MCF 10A (cell line): ENCODE measurements at regions of chr18 and their contacts with region 1.

Region 1: GRCh38 chr18:9069601-9070000 is 32.9 kb upstream of the NDUFV2 start:
- DNase-seq: no peak
- H3K4me3 Mint-ChIP-seq: no peak overlapping the region
- H3K27ac Mint-ChIP-seq: no peak overlapping the region
- H3K4me1 Mint-ChIP-seq: peaks cover 7% of the 10 kb centered on the region
- H3K27me3 Mint-ChIP-seq: no peaks in the 10 kb centered on the region
- CTCF ChIP-seq: no peak

Region 2: DNA sequence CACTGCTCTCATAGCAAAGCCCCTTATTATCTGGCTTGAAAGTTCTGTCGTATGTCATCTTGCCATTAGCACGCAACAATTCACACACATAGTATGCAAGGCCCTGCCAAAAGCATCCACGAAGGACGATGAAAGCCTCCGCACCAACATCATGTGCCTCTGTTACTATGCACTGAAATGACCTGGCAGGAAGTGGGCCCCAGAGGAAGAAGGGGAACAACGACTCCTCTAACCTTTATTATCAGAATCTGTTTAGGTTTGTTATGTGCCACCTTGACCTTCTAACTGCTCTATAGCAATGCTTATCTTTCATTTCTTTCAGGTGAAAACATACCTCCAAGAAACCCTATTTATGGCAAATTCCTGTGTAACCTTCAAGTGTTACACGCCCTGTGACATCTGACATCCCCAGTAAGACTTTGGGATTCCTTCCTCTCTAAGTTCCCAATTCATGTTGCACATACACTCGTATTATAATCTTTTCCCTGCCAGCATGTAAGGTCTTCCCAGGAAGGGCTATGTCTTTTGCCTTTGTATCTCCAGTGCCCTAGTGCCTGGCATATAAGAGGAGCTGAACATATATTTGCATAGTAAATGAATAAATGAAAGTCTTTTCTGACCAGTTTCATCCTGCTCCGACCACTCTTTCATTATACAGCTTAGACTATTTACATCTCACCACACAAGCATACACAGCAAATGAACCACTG is 25.9 kb after region 1 on chr18:
- CTCF ChIA-PET with region 1: interaction called, 3 read pairs
- POLR2A ChIA-PET with region 1: interaction called, 25 read pairs
- intact Hi-C with region 1: no loop called
- DNase-seq: no peak
- H3K4me3 Mint-ChIP-seq: no peak overlapping the region
- H3K27ac Mint-ChIP-seq: no peak overlapping the region
- H3K4me1 Mint-ChIP-seq: no peaks in the 10 kb centered on the region
- H3K27me3 Mint-ChIP-seq: no peaks in the 10 kb centered on the region
- CTCF ChIP-seq: no peak

Region 3: GRCh38 chr18:9117980-9118841 is 48.6 kb after region 1 on chr18:
- CTCF ChIA-PET with region 1: interaction called, 4 read pairs
- POLR2A ChIA-PET with region 1: interaction called, 20 read pairs
- intact Hi-C with region 1: no loop called
- DNase-seq: peak; percentile 44
- H3K4me3 Mint-ChIP-seq: peak overlapping the region; percentile 52
- H3K27ac Mint-ChIP-seq: peak overlapping the region; percentile 98
- H3K4me1 Mint-ChIP-seq: peaks cover 37% of the 10 kb centered on the region
- H3K27me3 Mint-ChIP-seq: no peaks in the 10 kb centered on the region
- CTCF ChIP-seq: no peak

Region 4: GRCh38 chr18:9147440-9148202 is 78.0 kb after region 1 on chr18:
- CTCF ChIA-PET with region 1: interaction called, 10 read pairs
- POLR2A ChIA-PET with region 1: interaction called, 123 read pairs
- intact Hi-C with region 1: loop called (anchors 1 kb)
- DNase-seq: peak; percentile 79
- H3K4me3 Mint-ChIP-seq: no peak overlapping the region
- H3K27ac Mint-ChIP-seq: peak overlapping the region; percentile 66
- H3K4me1 Mint-ChIP-seq: peaks cover 29% of the 10 kb centered on the region
- H3K27me3 Mint-ChIP-seq: no peaks in the 10 kb centered on the region
- CTCF ChIP-seq: peak; percentile 66